Gastrocnemius medialis (tissue), 4 donors: ENCODE measurements at regions of chr4 and their contacts with region 1.

Region 1: DNA sequence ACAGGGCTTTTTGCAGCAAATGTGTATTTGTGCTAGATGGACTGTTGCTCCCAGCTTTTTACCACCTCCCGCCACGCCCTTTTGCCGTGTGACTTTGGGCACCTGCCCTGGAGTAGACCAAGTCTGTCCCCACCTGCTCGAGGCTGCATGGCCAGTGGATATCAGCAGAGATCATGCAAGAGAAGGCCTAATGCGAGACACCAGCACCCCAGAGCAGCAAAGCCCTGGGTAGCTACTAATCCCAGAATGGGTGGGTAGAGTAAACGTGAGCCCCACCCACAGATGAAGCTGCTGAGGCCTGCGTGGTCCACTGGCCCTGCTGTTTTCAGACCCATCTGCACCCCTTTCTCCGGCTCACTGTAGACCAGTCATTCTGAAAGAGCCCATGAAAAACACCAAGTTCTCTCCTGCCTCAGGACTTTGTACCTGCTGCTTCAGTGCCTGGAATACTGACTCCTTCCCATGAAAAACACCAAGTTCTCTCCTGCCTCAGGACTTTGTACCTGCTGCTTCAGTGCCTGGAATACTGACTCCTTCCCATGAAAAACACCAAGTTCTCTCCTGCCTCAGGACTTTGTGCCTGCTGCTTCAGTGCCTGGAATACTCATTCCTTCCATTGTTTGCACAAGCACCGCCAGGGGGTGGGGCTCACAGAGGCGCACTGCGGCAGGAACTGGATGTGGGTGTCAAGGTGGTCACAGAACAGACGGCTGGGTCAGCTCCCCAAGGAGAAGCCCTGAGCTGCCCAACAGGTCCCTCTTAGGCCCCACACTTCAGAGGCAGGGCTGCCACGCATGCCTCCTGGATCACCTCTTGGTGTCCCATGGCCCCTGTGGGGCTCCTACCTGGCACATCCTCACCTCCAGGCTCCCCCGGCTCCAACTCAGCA is 5.1 kb upstream of the TNIP2 start:
- DNase-seq: no peak
- ATAC-seq: no peak
- H3K4me3 ChIP-seq: no peak overlapping the region
- H3K27ac ChIP-seq: no peak overlapping the region
- H3K4me1 ChIP-seq: peaks cover 0 to 4% of the 10 kb centered on the region in 2 donors
- H3K27me3 ChIP-seq: no peaks in the 10 kb centered on the region
- CTCF ChIP-seq: no peak
- POLR2A ChIP-seq: no peak

Region 2: GRCh38 chr4:2811830-2812611 is 50.7 kb after region 1 on chr4:
- in situ Hi-C with region 1: no loop called
- intact Hi-C with region 1: no loop called
- DNase-seq: peak; percentile 70 to 81
- ATAC-seq: peak; percentile 82 to 87
- H3K4me3 ChIP-seq: peak overlapping the region; percentile 53 to 58 (median 56)
- H3K27ac ChIP-seq: peak overlapping the region; percentile 89 to 93 (median 92)
- H3K4me1 ChIP-seq: peaks cover 48 to 50% of the 10 kb centered on the region in 2 donors
- H3K27me3 ChIP-seq: no peaks in the 10 kb centered on the region
- CTCF ChIP-seq: no peak
- POLR2A ChIP-seq: peak; percentile 24 to 25

Region 3: DNA sequence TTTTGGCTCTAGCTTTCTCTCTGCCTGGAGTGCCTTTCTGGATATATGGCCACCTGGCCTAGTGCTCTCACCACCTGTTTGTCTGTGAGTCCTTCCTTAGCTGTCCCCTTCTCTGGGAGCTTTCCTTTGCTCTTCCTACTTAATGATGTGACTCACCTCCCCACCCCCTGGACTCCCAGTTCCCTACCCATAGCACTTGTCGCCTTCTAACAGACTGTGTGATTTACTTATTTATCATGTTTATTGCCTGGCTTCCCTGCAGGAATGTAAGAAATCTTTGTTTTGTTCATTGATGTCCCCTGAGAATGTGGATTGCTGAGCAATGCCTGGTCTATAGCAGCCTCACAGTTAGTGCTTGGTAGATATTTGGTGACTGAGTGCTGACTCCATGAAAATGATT is 101.2 kb after region 1 on chr4:
- in situ Hi-C with region 1: no loop called
- intact Hi-C with region 1: loop called (anchors 10 kb)
- DNase-seq: peak in 1 of 2 donors; percentile 3
- ATAC-seq: peak; percentile 36 to 59
- H3K4me3 ChIP-seq: peak overlapping the region; percentile 3 to 36 (median 23)
- H3K27ac ChIP-seq: peak overlapping the region; percentile 70 to 84 (median 79)
- H3K4me1 ChIP-seq: peaks cover 99 to 100% of the 10 kb centered on the region in 2 donors
- H3K27me3 ChIP-seq: no peaks in the 10 kb centered on the region
- CTCF ChIP-seq: no peak
- POLR2A ChIP-seq: no peak

Region 4: GRCh38 chr4:2934813-2935761 is 173.8 kb after region 1 on chr4:
- in situ Hi-C with region 1: loop called in 1 of 4 experiments (anchors 25 kb)
- intact Hi-C with region 1: loop called (anchors 2 kb)
- DNase-seq: peak; percentile 89 to 92
- ATAC-seq: peak; percentile 77 to 83
- H3K4me3 ChIP-seq: peak overlapping the region; percentile 75 to 98 (median 94)
- H3K27ac ChIP-seq: peak overlapping the region; percentile 86 to 98 (median 94)
- H3K4me1 ChIP-seq: peaks cover 29 to 30% of the 10 kb centered on the region in 2 donors
- H3K27me3 ChIP-seq: no peaks in the 10 kb centered on the region
- CTCF ChIP-seq: no peak
- POLR2A ChIP-seq: peak; percentile 90 to 95

Region 5: DNA sequence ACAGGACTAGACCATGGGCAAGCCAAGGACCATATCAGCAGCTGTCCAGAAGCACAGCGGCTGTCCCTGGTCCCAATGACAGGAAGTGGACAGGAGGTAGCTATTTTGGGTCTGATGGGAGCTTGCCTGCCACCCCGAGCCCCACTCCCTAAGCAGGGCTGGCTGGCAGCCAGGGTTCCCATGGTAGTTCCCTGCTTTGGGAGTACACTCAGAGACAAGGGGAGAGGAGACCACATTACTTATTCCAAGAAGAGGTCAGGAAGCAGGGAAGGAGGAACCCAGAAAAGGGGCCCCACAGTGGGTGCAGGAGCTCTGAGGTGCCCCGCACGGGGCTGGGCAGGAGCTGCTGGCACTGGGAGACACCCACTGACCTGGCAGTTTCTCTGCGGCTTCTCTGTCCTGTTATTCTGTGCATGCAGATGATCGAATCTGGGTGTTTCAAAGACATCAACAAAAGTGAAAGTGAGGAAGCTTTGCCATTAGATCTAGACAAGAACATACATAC is 276.7 kb after region 1 on chr4:
- in situ Hi-C with region 1: no loop called
- intact Hi-C with region 1: loop called (anchors 1 kb)
- DNase-seq: peak in 1 of 2 donors; percentile 36
- ATAC-seq: no peak
- H3K4me3 ChIP-seq: peak overlapping the region in 2 of 4 donors; percentile 12 to 18
- H3K27ac ChIP-seq: peak overlapping the region in 2 of 4 donors; percentile 19 to 41
- H3K4me1 ChIP-seq: peaks cover 20% of the 10 kb centered on the region in 2 donors
- H3K27me3 ChIP-seq: no peaks in the 10 kb centered on the region
- CTCF ChIP-seq: no peak
- POLR2A ChIP-seq: no peak